GM12878 (cell line): ENCODE measurements at regions of chr14 and their contacts with region 1.

Region 1: DNA sequence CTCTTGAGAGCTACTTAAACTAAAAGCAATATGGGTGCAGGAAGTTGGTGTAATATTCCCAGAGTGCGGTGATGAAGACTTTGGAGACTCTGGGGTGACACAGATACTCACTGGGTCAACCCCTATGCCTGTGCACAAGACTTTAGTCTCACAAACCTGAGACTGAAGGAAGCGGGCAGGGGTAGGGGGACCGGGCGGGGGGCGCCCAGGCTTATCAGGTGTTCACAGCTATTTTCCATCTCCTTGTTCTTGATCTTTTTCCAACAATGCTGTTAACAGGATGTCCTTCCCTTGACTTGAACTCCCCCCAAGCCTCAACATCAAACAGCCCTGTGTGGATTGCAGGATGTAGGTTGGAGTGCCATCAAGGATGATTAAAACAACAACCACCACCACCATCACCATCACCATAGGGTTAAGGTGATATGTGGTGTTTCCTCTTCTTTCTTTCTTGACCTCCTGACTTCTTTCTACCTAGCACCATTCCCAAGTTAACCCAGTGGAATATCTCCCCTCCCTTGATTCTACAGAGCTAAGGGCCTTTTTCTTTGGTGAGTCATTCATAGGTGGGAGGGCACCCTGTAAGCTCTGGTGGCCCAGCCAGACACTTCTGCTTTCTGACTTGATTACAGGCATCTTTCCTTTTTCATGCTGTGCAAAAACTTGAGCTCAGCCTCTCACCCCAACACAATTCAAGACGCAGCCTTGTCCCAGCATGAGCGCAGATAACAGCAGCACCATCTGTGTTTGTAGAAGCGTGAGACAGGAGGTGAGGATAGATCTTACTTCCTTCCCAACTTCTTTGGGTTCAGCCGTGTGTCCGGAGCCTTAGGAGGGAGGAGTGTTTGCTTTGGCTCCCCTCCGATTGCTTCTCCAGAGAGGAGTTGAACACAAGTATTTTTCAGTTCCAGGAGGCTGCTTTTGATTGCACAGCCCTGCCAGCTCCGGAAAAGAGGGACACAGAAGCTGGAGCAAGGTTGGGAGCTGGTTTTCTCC is 26.7 kb downstream of the FLVCR2 start:
- DNase-seq: no peak
- ATAC-seq: no peak
- H3K4me3 ChIP-seq: no peak overlapping the region
- H3K27ac ChIP-seq: no peak overlapping the region
- H3K4me1 ChIP-seq: no peaks in the 10 kb centered on the region
- H3K27me3 ChIP-seq: no peaks in the 10 kb centered on the region
- CTCF ChIP-seq: no peak
- EP300 ChIP-seq: no peak
- POLR2A ChIP-seq: no peak
- RAD21 ChIP-seq: no peak

Region 2: GRCh38 chr14:75619548-75619947 is 14.4 kb after region 1 on chr14:
- CTCF ChIA-PET with region 1: interaction called, 14 read pairs
- POLR2A ChIA-PET with region 1: interaction called, 4 read pairs
- RAD21 ChIA-PET with region 1: interaction called, 4 read pairs
- SMC1A ChIA-PET with region 1: interaction called, 13 read pairs
- in situ Hi-C with region 1: no loop called
- intact Hi-C with region 1: no loop called
- DNase-seq: no peak
- ATAC-seq: no peak
- H3K4me3 ChIP-seq: no peak overlapping the region
- H3K27ac ChIP-seq: no peak overlapping the region
- H3K4me1 ChIP-seq: no peaks in the 10 kb centered on the region
- H3K27me3 ChIP-seq: no peaks in the 10 kb centered on the region
- CTCF ChIP-seq: no peak
- EP300 ChIP-seq: no peak
- POLR2A ChIP-seq: no peak
- RAD21 ChIP-seq: no peak

Region 3: GRCh38 chr14:75628816-75629215 is 23.7 kb after region 1 on chr14:
- CTCF ChIA-PET with region 1: interaction called, 7 read pairs
- POLR2A ChIA-PET with region 1: interaction called, 4 read pairs
- RAD21 ChIA-PET with region 1: interaction called, 4 read pairs
- SMC1A ChIA-PET with region 1: interaction called, 13 read pairs
- in situ Hi-C with region 1: no loop called
- intact Hi-C with region 1: no loop called
- DNase-seq: no peak
- ATAC-seq: no peak
- H3K4me3 ChIP-seq: no peak overlapping the region
- H3K27ac ChIP-seq: no peak overlapping the region
- H3K4me1 ChIP-seq: no peaks in the 10 kb centered on the region
- H3K27me3 ChIP-seq: no peaks in the 10 kb centered on the region
- CTCF ChIP-seq: no peak
- EP300 ChIP-seq: no peak
- POLR2A ChIP-seq: no peak
- RAD21 ChIP-seq: no peak